ENCODE measurements at regions of chr15 and their contacts with region 1.

Region 1: GRCh38 chr15:51888593-51889195 is 59.2 kb downstream of the TMOD3 start:
- DNase-seq: no peak
- H3K4me3 ChIP-seq: no peak overlapping the region
- CTCF ChIP-seq: peak; percentile 58

Region 2: GRCh38 chr15:51874751-51875528 is 13.8 kb before region 1 on chr15:
- CTCF ChIA-PET with region 1: interaction called, 30 read pairs
- POLR2A ChIA-PET with region 1: interaction called, 7 read pairs
- DNase-seq: peak; percentile 94
- H3K4me3 ChIP-seq: no peak overlapping the region
- CTCF ChIP-seq: no peak

Region 3: GRCh38 chr15:51917493-51917892 is 28.8 kb after region 1 on chr15:
- CTCF ChIA-PET with region 1: interaction called, 15 read pairs
- POLR2A ChIA-PET with region 1: no interaction called
- DNase-seq: no peak
- H3K4me3 ChIP-seq: no peak overlapping the region
- CTCF ChIP-seq: peak; percentile 32

Measured in AG04449 (cell line).